MCF 10A (cell line): ENCODE measurements at regions of chr15 and their contacts with region 1.

Region 1: DNA sequence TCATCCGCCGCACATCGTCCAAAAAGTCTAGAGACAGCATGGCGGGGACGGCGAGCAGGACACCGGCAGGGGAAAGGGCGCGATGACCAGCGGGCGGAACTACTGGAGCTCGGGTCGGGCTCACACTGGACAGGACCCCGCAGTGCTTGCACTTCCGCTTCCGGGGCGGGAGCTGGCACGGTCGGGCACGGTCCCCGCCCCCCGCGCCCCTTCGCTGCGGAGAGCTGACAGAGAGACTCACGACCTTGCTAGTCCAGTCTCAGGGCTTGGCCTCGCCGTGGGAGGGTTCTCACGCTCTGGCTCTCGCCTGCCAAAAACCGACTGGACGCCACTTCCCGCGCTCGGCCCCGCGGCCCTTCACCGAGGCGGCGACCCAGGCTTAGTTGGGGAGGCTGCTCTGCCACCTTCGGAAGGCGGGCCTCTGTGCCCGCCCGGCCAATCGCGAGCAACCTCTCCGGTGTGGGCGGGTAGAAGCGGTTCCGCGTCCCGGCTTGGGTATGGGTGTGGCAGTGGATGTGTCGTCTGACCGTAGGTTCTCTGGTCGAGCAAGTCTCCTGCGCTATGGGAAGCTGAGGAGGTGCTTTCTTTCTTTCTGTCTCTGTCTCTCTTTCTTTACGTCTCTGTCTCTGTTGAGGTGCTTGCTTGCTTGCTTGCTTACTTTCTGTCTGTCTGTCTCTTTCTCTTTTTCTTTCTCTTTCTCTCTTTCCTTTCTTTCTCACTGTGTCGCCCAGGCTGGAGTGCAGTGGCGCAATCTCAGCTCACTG is at the start of gene SEC11A:
- DNase-seq: peak; percentile 96
- H3K4me3 Mint-ChIP-seq: peak within 1 kb of the TSS; percentile 83
- H3K27ac Mint-ChIP-seq: peak within 1 kb of the TSS; percentile 85
- H3K4me1 Mint-ChIP-seq: peaks cover 6% of the 10 kb centered on the region
- H3K27me3 Mint-ChIP-seq: no peaks in the 10 kb centered on the region
- CTCF ChIP-seq: no peak
- total RNA-seq, gene SEC11A: 192 and 197 TPM in 2 replicates

Region 2: GRCh38 chr15:84685304-84685703 is 30.9 kb before region 1 on chr15:
- CTCF ChIA-PET with region 1: no interaction called
- POLR2A ChIA-PET with region 1: interaction called, 12 read pairs
- intact Hi-C with region 1: no loop called
- DNase-seq: peak; percentile 90
- H3K4me3 Mint-ChIP-seq: no peak overlapping the region
- H3K27ac Mint-ChIP-seq: no peak overlapping the region
- H3K4me1 Mint-ChIP-seq: peaks cover 12% of the 10 kb centered on the region
- H3K27me3 Mint-ChIP-seq: no peaks in the 10 kb centered on the region
- CTCF ChIP-seq: no peak

Region 3: DNA sequence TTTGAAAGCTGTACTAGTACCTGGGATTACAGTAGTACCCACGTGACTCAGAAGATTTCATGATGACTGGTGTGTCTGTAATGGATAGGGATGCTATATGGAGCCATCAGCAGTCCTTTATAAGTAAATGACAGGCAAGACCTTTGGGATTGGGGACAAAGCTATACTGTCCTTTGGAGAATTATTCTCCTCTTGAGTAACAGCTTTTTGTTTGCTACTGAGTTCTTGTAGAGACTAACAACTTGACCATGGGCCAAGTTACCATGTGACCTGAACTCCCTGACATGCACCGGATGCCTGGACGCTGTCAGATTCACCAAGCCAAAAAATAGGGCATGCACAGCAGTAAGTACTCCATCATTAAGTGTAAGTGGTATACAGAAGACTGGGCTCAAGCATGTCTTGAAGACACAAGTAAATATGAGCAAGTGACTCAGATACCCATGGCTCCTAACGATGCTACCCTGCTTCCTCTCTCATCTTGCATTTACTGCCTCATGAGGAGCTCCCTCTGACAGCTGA is 13.2 kb before region 1 on chr15:
- CTCF ChIA-PET with region 1: interaction called, 3 read pairs
- POLR2A ChIA-PET with region 1: interaction called, 48 read pairs
- intact Hi-C with region 1: no loop called
- DNase-seq: no peak
- H3K4me3 Mint-ChIP-seq: no peak overlapping the region
- H3K27ac Mint-ChIP-seq: no peak overlapping the region
- H3K4me1 Mint-ChIP-seq: no peaks in the 10 kb centered on the region
- H3K27me3 Mint-ChIP-seq: no peaks in the 10 kb centered on the region
- CTCF ChIP-seq: no peak

Region 4: DNA sequence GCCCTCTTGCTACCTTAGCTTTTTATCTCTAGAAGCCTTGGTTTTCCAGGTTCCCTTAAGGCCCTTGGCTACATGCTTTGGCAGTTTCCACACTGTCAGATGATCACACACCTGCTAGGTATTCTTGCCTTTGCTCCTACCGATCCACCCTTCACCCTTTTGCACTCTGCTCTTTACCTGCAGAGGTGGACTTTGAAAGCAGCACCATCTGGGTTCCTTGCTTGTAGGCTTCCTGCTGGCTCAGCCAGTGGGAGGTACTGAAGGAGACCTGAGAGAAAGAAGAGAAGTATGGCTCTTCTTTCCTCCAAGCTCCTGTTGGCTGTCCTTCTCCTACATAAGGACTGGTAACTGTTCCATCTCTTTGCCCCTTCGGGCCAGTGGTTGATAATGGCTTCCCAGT is 24.9 kb after region 1 on chr15:
- CTCF ChIA-PET with region 1: interaction called, 5 read pairs
- POLR2A ChIA-PET with region 1: interaction called, 105 read pairs
- intact Hi-C with region 1: no loop called
- DNase-seq: no peak
- H3K4me3 Mint-ChIP-seq: no peak overlapping the region
- H3K27ac Mint-ChIP-seq: no peak overlapping the region
- H3K4me1 Mint-ChIP-seq: peaks cover 13% of the 10 kb centered on the region
- H3K27me3 Mint-ChIP-seq: no peaks in the 10 kb centered on the region
- CTCF ChIP-seq: no peak

Region 5: DNA sequence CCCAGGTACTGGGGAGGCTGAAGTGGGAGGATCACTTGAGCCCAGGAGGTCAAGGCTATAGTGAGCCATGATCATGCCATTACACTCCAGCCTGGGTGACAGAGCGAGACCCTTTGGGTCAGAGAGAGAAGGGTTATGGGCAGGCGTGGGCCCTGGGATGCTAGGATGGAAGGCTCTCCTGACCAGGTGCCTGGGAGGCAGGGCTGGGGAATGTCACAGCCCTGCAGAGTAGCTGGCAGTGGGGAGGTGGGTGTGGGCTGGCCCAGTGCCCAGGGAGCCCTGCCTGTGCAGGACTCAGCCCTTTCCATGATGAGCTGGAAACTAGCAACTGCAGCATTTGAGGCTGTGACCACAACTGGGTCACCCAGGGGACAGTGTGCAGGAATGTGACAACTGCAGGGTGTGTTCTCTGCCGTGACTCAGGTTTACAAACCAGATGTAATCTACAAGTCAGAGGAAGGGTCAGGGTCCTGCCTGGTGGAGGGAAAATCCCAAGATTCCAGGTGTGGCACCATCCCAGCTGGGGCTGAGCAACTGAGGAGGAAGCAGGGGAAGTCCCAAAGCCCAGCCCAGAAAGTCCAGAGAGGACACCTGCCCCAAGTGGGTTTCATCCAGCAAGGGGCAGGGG is 213.6 kb after region 1 on chr15:
- CTCF ChIA-PET with region 1: interaction called, 13 read pairs
- POLR2A ChIA-PET with region 1: interaction called, 6 read pairs
- intact Hi-C with region 1: loop called (anchors 5 kb)
- DNase-seq: peak; percentile 52
- H3K4me3 Mint-ChIP-seq: no peak overlapping the region
- H3K27ac Mint-ChIP-seq: no peak overlapping the region
- H3K4me1 Mint-ChIP-seq: peaks cover 20% of the 10 kb centered on the region
- H3K27me3 Mint-ChIP-seq: no peaks in the 10 kb centered on the region
- CTCF ChIP-seq: no peak